ENCODE measurements at regions of chr18 and their contacts with region 1.

Region 1: DNA sequence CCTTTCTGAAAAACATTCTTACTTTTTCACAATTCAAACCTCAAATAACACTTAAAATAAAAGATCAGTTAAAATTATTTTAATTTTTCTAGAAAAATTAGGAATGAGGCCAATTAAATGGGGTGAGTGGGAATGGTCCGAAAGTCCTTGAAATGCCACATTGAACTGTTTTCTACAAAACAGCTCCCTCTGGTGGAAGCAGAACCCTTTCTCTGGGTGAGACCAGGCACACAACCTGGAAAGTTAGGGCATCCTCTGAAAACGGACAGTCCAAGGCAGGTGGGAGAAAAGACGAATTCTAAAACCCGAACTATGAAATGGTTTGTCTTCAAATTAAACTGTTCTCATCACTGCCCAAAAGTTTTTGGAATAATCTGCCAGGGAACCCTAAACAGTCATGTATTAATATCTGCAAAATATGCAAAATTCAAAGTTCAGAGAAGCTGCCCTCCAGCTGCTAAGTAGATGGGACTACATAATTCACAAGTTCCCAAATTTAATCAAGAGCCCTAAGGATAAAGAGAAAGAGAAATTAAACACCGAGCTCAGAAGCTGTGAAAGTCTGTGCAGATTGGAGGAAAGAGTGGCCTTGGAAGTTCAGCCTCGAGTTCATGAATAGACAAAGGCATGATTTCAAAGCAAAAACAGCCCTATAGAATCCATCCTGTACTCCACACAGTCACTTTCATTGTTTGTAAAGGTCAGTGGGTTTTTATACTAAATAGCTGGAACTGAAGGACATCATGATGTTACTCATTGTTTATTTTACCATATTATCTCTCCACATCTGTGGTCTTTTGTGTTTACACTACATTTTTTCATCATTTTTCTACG is 108.3 kb downstream of the PIEZO2 start:
- DNase-seq: peak; percentile 48
- H3K4me3 ChIP-seq: no peak overlapping the region; a peak in 1 of 4 replicates
- H3K27ac ChIP-seq: no peak overlapping the region
- H3K4me1 ChIP-seq: no peaks in the 10 kb centered on the region
- H3K27me3 ChIP-seq: peaks cover under 1% of the 10 kb centered on the region; the same call in 1 of the 2 replicates
- CTCF ChIP-seq: peak; percentile 73
- EP300 ChIP-seq: no peak
- RAD21 ChIP-seq: peak; percentile 59

Region 2: DNA sequence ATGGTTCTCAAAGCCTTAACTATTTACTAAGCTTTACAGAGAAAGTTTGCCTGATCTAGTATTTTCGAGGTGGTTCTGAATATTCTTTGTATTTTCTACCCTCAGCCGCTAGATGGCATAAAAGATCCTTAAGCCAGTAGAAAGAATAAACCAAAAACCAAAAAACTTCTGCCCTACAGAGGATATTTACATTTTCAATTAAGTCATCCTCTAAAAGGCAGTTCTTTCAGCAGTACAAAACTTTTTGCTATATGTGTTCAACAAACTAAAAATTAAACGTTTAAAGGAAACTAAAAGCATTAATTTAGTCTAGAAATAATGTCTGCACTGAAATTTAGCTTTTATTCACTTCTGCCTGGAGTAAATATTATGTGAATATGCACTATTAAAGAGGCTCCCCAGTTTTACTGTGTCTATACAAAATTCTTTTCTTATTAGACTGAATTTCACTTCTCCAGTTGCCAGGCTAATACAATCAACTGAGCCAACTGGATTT is 189.2 kb before region 1 on chr18:
- CTCF ChIA-PET with region 1: interaction called, 14 read pairs
- POLR2A ChIA-PET with region 1: no interaction called
- DNase-seq: peak; percentile 29
- H3K4me3 ChIP-seq: peak overlapping the region in 1 of 2 experiments; percentile 10; a peak in 1 of 4 replicates
- H3K27ac ChIP-seq: no peak overlapping the region
- H3K4me1 ChIP-seq: no peaks in the 10 kb centered on the region
- H3K27me3 ChIP-seq: peaks cover 24% of the 10 kb centered on the region
- CTCF ChIP-seq: peak; percentile 87
- EP300 ChIP-seq: no peak
- RAD21 ChIP-seq: peak; percentile 81

Region 3: GRCh38 chr18:11027862-11028261 is 13.2 kb before region 1 on chr18:
- CTCF ChIA-PET with region 1: interaction called, 14 read pairs
- POLR2A ChIA-PET with region 1: no interaction called
- DNase-seq: no peak
- H3K4me3 ChIP-seq: no peak overlapping the region
- H3K27ac ChIP-seq: no peak overlapping the region
- H3K4me1 ChIP-seq: no peaks in the 10 kb centered on the region
- H3K27me3 ChIP-seq: peaks cover 17% of the 10 kb centered on the region; the same call in 1 of the 2 replicates
- CTCF ChIP-seq: no peak
- EP300 ChIP-seq: no peak
- RAD21 ChIP-seq: no peak

Region 4: DNA sequence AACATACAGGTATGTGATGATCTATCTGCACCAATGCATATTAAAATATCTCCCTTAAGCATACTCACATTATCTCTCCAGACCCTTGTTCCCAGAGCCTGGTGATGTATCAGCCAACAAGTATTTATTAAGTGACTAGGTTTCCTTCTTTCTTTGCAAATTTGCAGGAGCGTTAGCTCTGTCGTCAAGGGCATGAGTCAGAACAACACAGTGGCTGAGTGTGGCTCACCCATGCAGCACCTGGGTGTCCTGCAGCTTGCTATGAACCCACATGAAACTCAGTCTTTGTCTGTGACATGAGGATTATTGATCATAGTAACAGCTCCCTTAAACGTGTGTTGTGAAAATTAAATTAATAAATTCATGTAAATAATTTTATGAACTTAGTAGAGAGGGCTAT is 11.8 kb after region 1 on chr18:
- CTCF ChIA-PET with region 1: interaction called, 27 read pairs
- POLR2A ChIA-PET with region 1: no interaction called
- DNase-seq: no peak
- H3K4me3 ChIP-seq: no peak overlapping the region
- H3K27ac ChIP-seq: no peak overlapping the region
- H3K4me1 ChIP-seq: no peaks in the 10 kb centered on the region
- H3K27me3 ChIP-seq: peaks cover 4% of the 10 kb centered on the region
- CTCF ChIP-seq: no peak
- EP300 ChIP-seq: no peak
- RAD21 ChIP-seq: no peak